Activated CD4-positive, alpha-beta memory T cell treated with anti-CD3 and anti-CD28 coated beads for 36 hours (primary cell): ENCODE measurements at regions of chr5 and their contacts with region 1.

Region 1: DNA sequence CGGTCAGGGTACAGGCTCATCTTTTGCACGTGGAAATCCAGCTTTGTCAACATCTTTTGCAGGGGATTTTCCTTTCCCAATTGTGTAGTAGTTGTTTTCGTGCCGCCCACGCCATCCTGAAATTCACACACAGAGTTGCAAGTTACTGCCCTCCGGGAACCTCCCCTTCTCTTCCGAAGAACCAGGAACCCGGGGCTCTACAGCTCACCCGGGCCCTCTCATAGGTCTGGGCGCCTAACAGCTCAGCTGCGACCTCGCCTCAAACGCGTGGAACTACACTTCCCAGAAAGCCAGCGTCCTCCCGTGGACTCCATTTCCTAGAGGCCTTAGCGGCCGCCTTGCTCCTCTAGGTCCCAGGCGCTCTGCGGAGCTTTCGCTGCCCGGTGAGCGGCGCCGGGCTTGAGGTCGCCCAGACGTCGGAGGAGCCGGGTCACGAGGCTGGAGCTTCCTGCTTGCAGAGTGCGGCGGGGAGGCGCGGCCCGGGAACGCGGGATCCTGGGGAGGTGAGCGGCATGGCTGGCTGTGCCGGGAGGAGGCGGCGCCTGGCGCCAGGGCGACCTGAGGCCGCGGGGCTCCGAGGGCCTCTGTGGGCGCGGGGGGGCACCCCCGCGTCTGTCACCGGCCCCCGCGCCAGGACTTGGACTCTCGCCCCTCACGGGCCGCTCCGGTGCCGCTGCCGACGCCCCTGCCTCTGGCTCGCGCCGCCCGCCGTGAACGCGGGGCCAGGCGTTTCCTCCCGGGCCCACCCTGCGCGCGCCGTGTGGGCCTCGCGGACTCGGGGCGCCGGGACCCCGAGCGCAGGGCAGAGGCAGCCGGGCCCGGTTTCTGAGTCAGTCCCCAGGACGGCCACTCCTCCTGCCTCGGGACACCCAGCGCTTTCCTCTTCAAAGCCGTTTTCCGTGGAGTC is at the start of gene ZNF354B:
- DNase-seq: peak; percentile 93
- H3K4me3 Mint-ChIP-seq: peak within 1 kb of the TSS; percentile 85
- H3K27ac Mint-ChIP-seq: peak within 1 kb of the TSS; percentile 75
- H3K4me1 Mint-ChIP-seq: peaks cover 26% of the 10 kb centered on the region
- H3K27me3 Mint-ChIP-seq: no peaks in the 10 kb centered on the region
- total RNA-seq, gene ZNF354B: 8.7 to 12.6 TPM

Region 2: GRCh38 chr5:178626484-178627258 is 233.2 kb before region 1 on chr5 and contains the start of gene CLK4:
- CTCF ChIA-PET with region 1: no interaction called
- POLR2A ChIA-PET with region 1: no interaction called
- intact Hi-C with region 1: loop called (anchors 2 kb)
- DNase-seq: peak; percentile 97
- H3K4me3 Mint-ChIP-seq: peak within 1 kb of the TSS; percentile 92
- H3K27ac Mint-ChIP-seq: peak within 1 kb of the TSS; percentile 98
- H3K4me1 Mint-ChIP-seq: peaks cover 28% of the 10 kb centered on the region
- H3K27me3 Mint-ChIP-seq: no peaks in the 10 kb centered on the region
- total RNA-seq, gene CLK4: 25.1 to 26.0 TPM

Region 3: GRCh38 chr5:178895651-178896571 is 36.0 kb after region 1 on chr5 and contains the start of gene ZFP2:
- CTCF ChIA-PET with region 1: no interaction called
- POLR2A ChIA-PET with region 1: no interaction called
- intact Hi-C with region 1: loop called (anchors 5 kb)
- DNase-seq: peak; percentile 55
- H3K4me3 Mint-ChIP-seq: peak within 1 kb of the TSS; percentile 70
- H3K27ac Mint-ChIP-seq: no peak within 1 kb of the TSS
- H3K4me1 Mint-ChIP-seq: peaks cover 2% of the 10 kb centered on the region
- H3K27me3 Mint-ChIP-seq: no peaks in the 10 kb centered on the region
- total RNA-seq, gene ZFP2: 0.27 to 0.40 TPM

Region 4: GRCh38 chr5:178965465-178966055 is 105.7 kb after region 1 on chr5:
- CTCF ChIA-PET with region 1: no interaction called
- POLR2A ChIA-PET with region 1: no interaction called
- intact Hi-C with region 1: no loop called
- DNase-seq: no peak
- H3K4me3 Mint-ChIP-seq: no peak overlapping the region
- H3K27ac Mint-ChIP-seq: no peak overlapping the region
- H3K4me1 Mint-ChIP-seq: no peaks in the 10 kb centered on the region
- H3K27me3 Mint-ChIP-seq: no peaks in the 10 kb centered on the region

Region 5: DNA sequence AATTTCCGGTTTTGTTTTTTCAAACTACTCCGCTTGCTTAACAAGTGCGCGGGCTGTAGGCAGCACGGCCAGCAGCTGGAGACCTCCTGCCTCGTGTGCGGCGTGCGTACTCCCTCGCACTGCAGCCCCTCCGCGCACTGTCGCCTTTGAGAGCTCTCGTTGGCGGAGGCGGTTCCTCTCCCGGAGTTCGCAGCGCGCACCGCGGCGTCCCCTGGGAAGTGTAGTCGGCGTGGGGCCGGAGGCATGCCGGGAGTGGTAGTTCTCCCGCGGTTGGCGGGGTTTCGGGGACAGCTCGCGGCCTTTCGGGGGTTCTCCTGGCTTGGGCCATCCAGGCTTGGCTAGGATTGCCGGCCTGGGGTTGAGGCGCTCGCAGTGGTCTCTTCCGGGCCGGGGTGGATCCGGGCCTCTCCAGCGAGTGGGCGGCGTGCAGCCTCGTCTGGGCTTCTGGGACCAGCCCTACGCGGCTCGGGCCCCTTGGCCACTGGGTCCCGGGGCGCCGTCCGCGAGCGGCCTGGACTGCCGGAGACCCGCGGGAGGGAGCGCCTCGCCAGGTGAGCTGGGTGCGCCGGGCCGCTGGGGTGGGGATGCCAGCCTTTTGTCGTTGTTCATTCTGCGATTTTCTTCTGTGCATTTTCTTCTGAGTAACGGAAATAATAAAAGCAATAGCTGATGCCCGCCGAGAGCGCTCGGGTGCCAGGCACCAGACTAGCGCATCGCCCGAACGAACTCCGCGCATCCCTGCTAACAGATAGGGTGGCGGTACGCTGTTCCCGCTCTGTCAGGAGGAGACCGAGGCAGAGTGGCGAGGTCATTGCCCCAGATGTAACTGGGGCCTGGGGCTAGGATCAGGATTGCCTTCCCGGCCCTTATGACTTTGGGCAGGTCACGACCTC is 200.5 kb after region 1 on chr5 and contains the start of gene ZNF354C:
- CTCF ChIA-PET with region 1: interaction called, 4 read pairs
- POLR2A ChIA-PET with region 1: interaction called, 7 read pairs
- intact Hi-C with region 1: loop called (anchors 1 kb)
- DNase-seq: peak; percentile 91
- H3K4me3 Mint-ChIP-seq: peak within 1 kb of the TSS; percentile 82
- H3K27ac Mint-ChIP-seq: peak within 1 kb of the TSS; percentile 88
- H3K4me1 Mint-ChIP-seq: peaks cover 30% of the 10 kb centered on the region
- H3K27me3 Mint-ChIP-seq: peaks cover 6% of the 10 kb centered on the region
- total RNA-seq, gene ZNF354C: 5.9 to 6.0 TPM

Region 6: GRCh38 chr5:179550511-179551230 is 690.8 kb after region 1 on chr5 and contains the start of gene RUFY1:
- CTCF ChIA-PET with region 1: no interaction called
- POLR2A ChIA-PET with region 1: no interaction called
- intact Hi-C with region 1: loop called (anchors 5 kb)
- DNase-seq: peak; percentile 87
- H3K4me3 Mint-ChIP-seq: peak within 1 kb of the TSS; percentile 98
- H3K27ac Mint-ChIP-seq: peak within 1 kb of the TSS; percentile 99
- H3K4me1 Mint-ChIP-seq: peaks cover 36% of the 10 kb centered on the region
- H3K27me3 Mint-ChIP-seq: no peaks in the 10 kb centered on the region
- total RNA-seq, gene RUFY1: 30.3 to 34.0 TPM